ENCODE measurements at regions of chr1 and their contacts with region 1.

Region 1: GRCh38 chr1:206808615-206809014 is 36.3 kb upstream of the IL10 start:
- DNase-seq: peak; percentile 66
- H3K4me3 Mint-ChIP-seq: no peak overlapping the region
- H3K27ac Mint-ChIP-seq: peak overlapping the region; percentile 3
- H3K4me1 Mint-ChIP-seq: peaks cover 45% of the 10 kb centered on the region
- H3K27me3 Mint-ChIP-seq: no peaks in the 10 kb centered on the region

Region 2: GRCh38 chr1:206658264-206658980 is 150.2 kb before region 1 on chr1:
- CTCF ChIA-PET with region 1: interaction called, 8 read pairs
- POLR2A ChIA-PET with region 1: no interaction called
- intact Hi-C with region 1: loop called (anchors 2 kb)
- DNase-seq: peak; percentile 74
- H3K4me3 Mint-ChIP-seq: no peak overlapping the region
- H3K27ac Mint-ChIP-seq: no peak overlapping the region
- H3K4me1 Mint-ChIP-seq: peaks cover 20% of the 10 kb centered on the region
- H3K27me3 Mint-ChIP-seq: peaks cover 18% of the 10 kb centered on the region

Region 3: DNA sequence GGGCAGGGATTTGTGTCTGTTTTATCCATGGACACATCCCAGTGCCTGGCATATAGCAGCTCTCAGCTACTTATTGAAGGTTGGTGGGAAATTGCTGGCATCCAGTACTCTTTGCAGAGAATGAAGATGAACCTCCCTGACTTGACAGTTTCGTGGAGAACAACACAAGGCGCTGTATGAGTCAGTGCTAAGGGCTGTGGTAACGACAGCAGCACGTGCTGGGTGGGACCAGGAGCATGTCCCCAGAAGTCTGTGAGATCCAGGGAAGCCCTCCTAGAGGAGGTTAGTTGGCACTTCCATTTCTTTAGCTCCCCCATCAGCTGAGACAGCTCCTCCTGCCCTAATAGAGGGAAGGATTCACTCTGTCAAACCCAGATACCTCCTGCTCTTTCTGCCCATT is 63.9 kb before region 1 on chr1:
- CTCF ChIA-PET with region 1: interaction called, 10 read pairs
- POLR2A ChIA-PET with region 1: interaction called, 30 read pairs
- intact Hi-C with region 1: loop called (anchors 1 kb)
- DNase-seq: peak; percentile 55
- H3K4me3 Mint-ChIP-seq: no peak overlapping the region
- H3K27ac Mint-ChIP-seq: peak overlapping the region; percentile 7
- H3K4me1 Mint-ChIP-seq: peaks cover 63% of the 10 kb centered on the region
- H3K27me3 Mint-ChIP-seq: no peaks in the 10 kb centered on the region

Region 4: GRCh38 chr1:206797534-206798383 is 10.9 kb before region 1 on chr1:
- CTCF ChIA-PET with region 1: interaction called, 16 read pairs
- POLR2A ChIA-PET with region 1: interaction called, 17 read pairs
- intact Hi-C with region 1: loop called (anchors 1 kb)
- DNase-seq: peak; percentile 53
- H3K4me3 Mint-ChIP-seq: peak overlapping the region; percentile 42
- H3K27ac Mint-ChIP-seq: no peak overlapping the region
- H3K4me1 Mint-ChIP-seq: peaks cover 71% of the 10 kb centered on the region
- H3K27me3 Mint-ChIP-seq: peaks cover 16% of the 10 kb centered on the region

Region 5: DNA sequence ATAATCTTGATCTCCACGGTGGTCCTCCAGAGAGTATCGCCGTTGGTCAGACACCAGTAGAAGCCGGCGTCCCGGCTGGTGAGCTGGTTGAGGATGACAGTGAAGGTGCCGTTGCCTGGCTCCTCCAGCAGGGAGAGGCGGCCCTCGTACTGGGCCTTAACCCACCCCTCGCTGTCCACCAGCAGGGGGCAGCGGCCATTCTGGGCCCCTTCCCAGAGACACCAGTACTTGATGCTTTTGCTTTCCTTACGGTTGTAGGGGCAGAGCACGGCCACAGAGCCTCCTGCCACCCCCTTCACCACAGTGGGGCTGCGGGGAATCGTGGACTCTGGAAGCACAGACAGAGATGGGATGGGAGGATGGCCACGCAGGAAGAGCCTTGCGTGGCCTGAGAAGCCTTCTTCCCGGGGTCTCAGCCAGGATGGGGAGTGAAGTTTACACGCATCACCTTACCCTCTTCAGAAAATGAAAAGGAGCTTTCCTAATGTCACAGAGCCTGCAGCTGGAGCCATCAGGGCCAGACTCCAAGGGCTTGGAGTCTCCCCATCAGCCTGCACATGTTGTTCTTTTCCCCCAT is 127.0 kb after region 1 on chr1:
- CTCF ChIA-PET with region 1: interaction called, 17 read pairs
- POLR2A ChIA-PET with region 1: no interaction called
- intact Hi-C with region 1: no loop called
- DNase-seq: peak; percentile 71
- H3K4me3 Mint-ChIP-seq: no peak overlapping the region
- H3K27ac Mint-ChIP-seq: no peak overlapping the region
- H3K4me1 Mint-ChIP-seq: peaks cover 15% of the 10 kb centered on the region
- H3K27me3 Mint-ChIP-seq: no peaks in the 10 kb centered on the region

Measured in activated CD4-positive, alpha-beta memory T cell treated with anti-CD3 and anti-CD28 coated beads for 36 hours (primary cell).